ENCODE measurements at regions of chr4 and their contacts with region 1.

Region 1: GRCh38 chr4:125741825-125742452 is 427.2 kb downstream of the FAT4 start:
- DNase-seq: no peak
- ATAC-seq: no peak
- H3K4me3 ChIP-seq: no peak overlapping the region
- H3K27ac ChIP-seq: no peak overlapping the region
- H3K4me1 ChIP-seq: no peaks in the 10 kb centered on the region
- H3K27me3 ChIP-seq: no peaks in the 10 kb centered on the region

Region 2: GRCh38 chr4:125022855-125023501 is 719.0 kb before region 1 on chr4:
- intact Hi-C with region 1: no loop called
- DNase-seq: no peak
- ATAC-seq: no peak
- H3K4me3 ChIP-seq: no peak overlapping the region
- H3K27ac ChIP-seq: no peak overlapping the region
- H3K4me1 ChIP-seq: no peaks in the 10 kb centered on the region
- H3K27me3 ChIP-seq: no peaks in the 10 kb centered on the region

Region 3: GRCh38 chr4:125520258-125520990 is 221.5 kb before region 1 on chr4:
- intact Hi-C with region 1: loop called in 1 of 2 experiments (anchors 5 kb)
- DNase-seq: no peak
- ATAC-seq: no peak
- H3K4me3 ChIP-seq: no peak overlapping the region
- H3K27ac ChIP-seq: no peak overlapping the region
- H3K4me1 ChIP-seq: no peaks in the 10 kb centered on the region
- H3K27me3 ChIP-seq: no peaks in the 10 kb centered on the region

Measured in aorta (tissue), 5 donors.